ENCODE measurements at regions of chr7 and their contacts with region 1.

Region 1: GRCh38 chr7:116653204-116653603 is 18.8 kb upstream of the MET start:
- DNase-seq: no peak
- H3K4me3 ChIP-seq: no peak overlapping the region
- H3K27ac ChIP-seq: no peak overlapping the region
- H3K4me1 ChIP-seq: no peaks in the 10 kb centered on the region
- H3K27me3 ChIP-seq: no peaks in the 10 kb centered on the region
- CTCF ChIP-seq: no peak
- POLR2A ChIP-seq: no peak

Region 2: DNA sequence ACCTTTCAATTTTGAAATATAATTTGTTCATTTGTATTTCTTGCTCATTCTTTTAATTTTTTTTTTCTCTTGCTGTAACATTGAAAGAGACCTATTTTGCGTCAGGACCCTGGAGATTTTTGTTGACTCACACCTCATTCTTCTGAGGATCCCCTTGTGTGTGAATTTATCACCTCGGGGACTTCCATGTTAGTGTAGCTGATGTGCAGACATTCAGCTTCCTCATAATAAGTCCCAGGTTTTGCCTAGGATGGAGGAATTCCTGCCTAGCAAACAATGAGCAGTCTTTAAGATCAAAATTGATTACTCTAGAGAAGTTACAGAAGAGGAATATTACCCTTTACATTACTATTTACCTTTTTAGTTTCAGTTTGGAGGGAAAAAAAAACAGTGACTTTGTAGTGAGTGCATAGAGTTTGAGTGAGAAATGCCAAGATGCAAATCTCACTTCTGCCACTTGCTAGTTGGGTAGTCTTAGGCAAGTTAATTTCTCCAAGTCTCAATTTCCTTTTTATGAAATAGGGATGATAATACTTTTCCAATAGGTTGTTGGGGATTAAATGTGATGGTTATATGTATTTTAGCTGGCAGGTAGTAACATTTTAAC is 428.6 kb before region 1 on chr7:
- intact Hi-C with region 1: no loop called
- DNase-seq: no peak
- H3K4me3 ChIP-seq: no peak overlapping the region
- H3K27ac ChIP-seq: no peak overlapping the region
- H3K4me1 ChIP-seq: no peaks in the 10 kb centered on the region
- H3K27me3 ChIP-seq: no peaks in the 10 kb centered on the region
- CTCF ChIP-seq: no peak
- POLR2A ChIP-seq: no peak

Region 3: DNA sequence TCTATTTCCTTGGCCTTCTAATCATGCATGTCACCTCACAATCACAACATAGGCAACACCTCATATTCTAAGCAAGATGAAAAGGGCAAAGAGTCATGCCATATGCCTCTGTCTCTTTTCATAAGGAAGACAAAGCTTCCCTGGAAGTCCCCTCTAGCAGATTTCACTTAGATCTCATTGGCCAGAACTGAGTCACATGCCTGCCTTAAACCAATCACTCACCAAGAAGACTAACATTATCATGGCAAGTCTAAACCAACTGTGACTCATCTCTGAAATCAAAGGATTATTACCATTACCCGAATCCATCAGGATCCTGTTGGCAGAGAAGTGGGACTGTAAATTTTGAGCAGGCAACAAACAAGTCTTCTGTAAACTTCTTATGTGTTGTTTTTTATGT is 100.6 kb before region 1 on chr7:
- intact Hi-C with region 1: no loop called
- DNase-seq: no peak
- H3K4me3 ChIP-seq: no peak overlapping the region
- H3K27ac ChIP-seq: no peak overlapping the region
- H3K4me1 ChIP-seq: peaks cover 4% of the 10 kb centered on the region
- H3K27me3 ChIP-seq: no peaks in the 10 kb centered on the region
- CTCF ChIP-seq: no peak
- POLR2A ChIP-seq: no peak

Region 4: DNA sequence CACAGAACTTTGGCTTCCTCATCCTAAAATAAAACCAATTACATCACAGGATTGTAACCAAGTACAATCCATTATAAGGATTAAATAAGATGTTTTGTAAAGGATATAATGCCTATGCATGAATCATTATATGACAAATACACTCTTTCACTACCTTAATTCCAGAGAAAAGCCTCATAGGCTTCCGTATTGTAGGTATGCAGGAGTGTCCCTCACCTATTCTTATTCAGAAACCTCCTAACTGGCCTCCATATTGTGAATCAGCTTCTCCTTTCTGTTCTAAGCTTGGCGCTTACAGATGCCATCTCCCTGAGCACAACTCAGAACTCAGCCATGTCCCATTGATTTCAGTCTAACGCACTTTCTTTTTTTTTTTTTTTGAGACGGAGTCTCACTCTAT is 139.6 kb after region 1 on chr7:
- intact Hi-C with region 1: loop called (anchors 5 kb)
- DNase-seq: no peak
- H3K4me3 ChIP-seq: no peak overlapping the region
- H3K27ac ChIP-seq: no peak overlapping the region
- H3K4me1 ChIP-seq: no peaks in the 10 kb centered on the region
- H3K27me3 ChIP-seq: no peaks in the 10 kb centered on the region
- CTCF ChIP-seq: no peak
- POLR2A ChIP-seq: no peak